Activated CD4-positive, alpha-beta T cell treated with anti-CD3 and anti-CD28 coated beads for 36 hours (primary cell): ENCODE measurements at regions of chr20 and their contacts with region 1.

Region 1: GRCh38 chr20:50790651-50791277 is 4.1 kb upstream of the BCAS4 start:
- DNase-seq: peak; percentile 93
- ATAC-seq: peak; percentile 86
- H3K4me3 Mint-ChIP-seq: no peak overlapping the region
- H3K27ac Mint-ChIP-seq: peak overlapping the region; percentile 75
- H3K4me1 Mint-ChIP-seq: peaks cover 12% of the 10 kb centered on the region
- H3K27me3 Mint-ChIP-seq: no peaks in the 10 kb centered on the region

Region 2: GRCh38 chr20:48904365-48905296 is 1886.1 kb before region 1 on chr20:
- CTCF ChIA-PET with region 1: no interaction called
- POLR2A ChIA-PET with region 1: no interaction called
- intact Hi-C with region 1: no loop called
- DNase-seq: peak; percentile 84
- ATAC-seq: peak; percentile 47
- H3K4me3 Mint-ChIP-seq: no peak overlapping the region
- H3K27ac Mint-ChIP-seq: peak overlapping the region; percentile 65
- H3K4me1 Mint-ChIP-seq: peaks cover 17% of the 10 kb centered on the region
- H3K27me3 Mint-ChIP-seq: peaks cover 2% of the 10 kb centered on the region

Region 3: GRCh38 chr20:50731055-50731871 is 59.5 kb before region 1 on chr20 and contains the start of gene PARD6B:
- CTCF ChIA-PET with region 1: interaction called, 4 read pairs
- POLR2A ChIA-PET with region 1: no interaction called
- intact Hi-C with region 1: loop called in 1 of 2 experiments (anchors 1 kb)
- DNase-seq: peak; percentile 100
- ATAC-seq: peak; percentile 92
- H3K4me3 Mint-ChIP-seq: peak within 1 kb of the TSS; percentile 85
- H3K27ac Mint-ChIP-seq: peak within 1 kb of the TSS; percentile 78
- H3K4me1 Mint-ChIP-seq: peaks cover 46% of the 10 kb centered on the region
- H3K27me3 Mint-ChIP-seq: no peaks in the 10 kb centered on the region
- total RNA-seq, gene PARD6B: 4.9 to 6.2 TPM

Region 4: GRCh38 chr20:50762435-50763201 is 28.1 kb before region 1 on chr20:
- CTCF ChIA-PET with region 1: no interaction called
- POLR2A ChIA-PET with region 1: no interaction called
- intact Hi-C with region 1: no loop called
- DNase-seq: no peak
- ATAC-seq: no peak
- H3K4me3 Mint-ChIP-seq: no peak overlapping the region
- H3K27ac Mint-ChIP-seq: no peak overlapping the region
- H3K4me1 Mint-ChIP-seq: no peaks in the 10 kb centered on the region
- H3K27me3 Mint-ChIP-seq: peaks cover 2% of the 10 kb centered on the region

Region 5: DNA sequence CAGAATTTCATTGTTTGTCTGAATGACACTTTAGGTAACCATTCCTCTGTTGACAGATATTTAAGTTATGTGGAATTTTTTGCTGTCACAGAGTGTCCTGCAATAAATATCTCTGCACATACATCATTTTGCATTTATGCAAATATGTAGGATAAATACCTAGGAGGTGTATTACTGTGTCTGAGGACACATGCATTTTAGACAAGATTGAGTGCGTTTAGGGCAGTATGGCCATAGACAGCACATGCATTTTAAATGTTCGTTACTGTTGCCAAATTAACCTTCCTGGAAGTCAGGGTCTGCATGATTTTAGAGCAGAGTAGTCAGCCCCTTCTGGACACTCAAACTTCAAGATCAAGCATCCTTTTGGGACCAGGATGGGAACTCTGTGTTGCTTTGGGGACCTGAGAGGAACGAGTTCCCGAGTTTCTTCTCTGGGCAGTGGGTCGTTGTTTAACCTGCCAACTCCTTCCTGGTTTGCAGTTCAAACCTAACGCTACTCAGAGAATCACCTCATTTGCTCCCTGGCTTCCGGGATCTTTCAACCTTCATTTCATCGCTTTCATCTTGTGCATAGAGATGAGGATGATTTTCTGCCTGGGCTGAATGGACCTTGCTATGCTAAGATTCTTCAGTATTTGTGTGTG is 13.8 kb after region 1 on chr20:
- CTCF ChIA-PET with region 1: interaction called, 24 read pairs
- POLR2A ChIA-PET with region 1: no interaction called
- intact Hi-C with region 1: no loop called
- DNase-seq: peak; percentile 39
- ATAC-seq: peak; percentile 82
- H3K4me3 Mint-ChIP-seq: peak overlapping the region; percentile 61
- H3K27ac Mint-ChIP-seq: peak overlapping the region; percentile 96
- H3K4me1 Mint-ChIP-seq: peaks cover 30% of the 10 kb centered on the region
- H3K27me3 Mint-ChIP-seq: no peaks in the 10 kb centered on the region

Region 6: DNA sequence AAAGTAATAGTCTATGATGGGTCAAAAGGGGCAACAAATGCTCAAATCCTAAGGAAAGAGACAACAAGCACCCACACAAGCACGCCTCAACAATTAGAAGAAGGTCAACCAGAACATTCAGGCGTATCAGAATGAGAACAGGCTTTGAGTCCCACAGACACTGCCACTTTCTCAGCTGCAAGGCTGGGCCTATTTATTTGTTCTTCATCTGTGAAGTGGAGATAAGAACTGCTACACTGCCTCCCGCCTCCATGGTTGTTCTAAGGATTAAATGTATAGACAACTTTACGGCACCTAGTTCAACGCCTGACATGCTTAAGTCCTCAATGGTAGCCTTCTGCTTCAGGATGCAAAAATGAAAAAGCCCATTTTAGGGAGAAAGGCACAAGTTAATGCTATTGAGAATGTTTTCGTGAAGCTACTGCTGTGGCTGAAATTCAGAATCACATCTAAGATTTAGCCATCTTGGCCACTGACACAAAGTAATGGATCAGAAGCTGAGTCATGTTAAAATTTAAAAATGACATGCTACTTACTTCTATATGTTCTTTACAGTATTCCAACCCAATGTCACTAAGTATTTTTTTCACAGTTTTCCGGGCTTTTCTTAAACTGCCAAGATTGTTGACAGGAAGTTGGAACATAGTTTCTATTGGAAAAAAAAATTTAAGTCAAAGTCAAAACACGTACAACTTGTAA is 112.7 kb after region 1 on chr20:
- CTCF ChIA-PET with region 1: interaction called, 10 read pairs
- POLR2A ChIA-PET with region 1: no interaction called
- intact Hi-C with region 1: no loop called
- DNase-seq: no peak
- ATAC-seq: no peak
- H3K4me3 Mint-ChIP-seq: no peak overlapping the region
- H3K27ac Mint-ChIP-seq: peak overlapping the region; percentile 37
- H3K4me1 Mint-ChIP-seq: peaks cover 25% of the 10 kb centered on the region
- H3K27me3 Mint-ChIP-seq: no peaks in the 10 kb centered on the region

Region 7: GRCh38 chr20:50929299-50930138 is 138.8 kb after region 1 on chr20:
- CTCF ChIA-PET with region 1: interaction called, 60 read pairs
- POLR2A ChIA-PET with region 1: interaction called, 8 read pairs
- intact Hi-C with region 1: loop called (anchors 1 kb)
- DNase-seq: peak; percentile 98
- ATAC-seq: peak; percentile 80
- H3K4me3 Mint-ChIP-seq: peak overlapping the region; percentile 92
- H3K27ac Mint-ChIP-seq: peak overlapping the region; percentile 95
- H3K4me1 Mint-ChIP-seq: peaks cover 55% of the 10 kb centered on the region
- H3K27me3 Mint-ChIP-seq: no peaks in the 10 kb centered on the region

Region 8: DNA sequence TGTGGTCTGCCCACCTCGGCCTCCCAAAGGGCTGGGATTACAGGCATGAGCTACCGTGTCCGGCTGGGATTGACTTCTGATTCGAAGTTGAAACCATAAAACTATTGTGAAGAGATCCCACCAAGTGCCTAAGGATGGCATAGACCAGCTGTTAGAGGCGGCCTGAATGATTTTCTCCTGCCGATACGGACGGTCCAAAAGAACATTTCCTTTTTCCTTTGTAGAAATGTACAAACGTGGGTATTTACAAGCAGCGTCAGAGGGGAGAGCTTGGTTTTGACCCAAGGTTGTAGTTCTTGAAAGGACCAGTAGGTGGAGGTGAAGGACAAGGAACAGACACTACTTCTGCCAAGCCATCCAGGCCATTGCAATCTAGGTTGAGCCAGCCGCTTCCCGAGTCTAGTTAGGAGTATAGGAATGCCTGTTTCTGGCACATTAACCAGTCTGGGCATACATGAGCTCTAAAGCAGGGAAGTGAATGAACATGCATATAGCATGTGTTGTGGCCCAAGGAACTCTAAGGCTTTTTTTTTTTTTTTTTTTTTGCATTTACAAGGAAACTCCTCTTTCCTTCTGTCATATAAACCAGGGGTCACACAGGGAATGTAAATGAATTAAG is 196.9 kb after region 1 on chr20:
- CTCF ChIA-PET with region 1: interaction called, 16 read pairs
- POLR2A ChIA-PET with region 1: interaction called, 3 read pairs
- intact Hi-C with region 1: no loop called
- DNase-seq: peak; percentile 71
- ATAC-seq: peak; percentile 89
- H3K4me3 Mint-ChIP-seq: no peak overlapping the region
- H3K27ac Mint-ChIP-seq: no peak overlapping the region
- H3K4me1 Mint-ChIP-seq: no peaks in the 10 kb centered on the region
- H3K27me3 Mint-ChIP-seq: peaks cover 23% of the 10 kb centered on the region

Region 9: GRCh38 chr20:50999026-50999754 is 208.4 kb after region 1 on chr20:
- CTCF ChIA-PET with region 1: no interaction called
- POLR2A ChIA-PET with region 1: no interaction called
- intact Hi-C with region 1: no loop called
- DNase-seq: no peak
- ATAC-seq: no peak
- H3K4me3 Mint-ChIP-seq: no peak overlapping the region
- H3K27ac Mint-ChIP-seq: no peak overlapping the region
- H3K4me1 Mint-ChIP-seq: peaks cover 3% of the 10 kb centered on the region
- H3K27me3 Mint-ChIP-seq: peaks cover 22% of the 10 kb centered on the region